SK-N-SH (cell line): ENCODE measurements at regions of chr2 and their contacts with region 1.

Region 1: GRCh38 chr2:205947621-205948495 is 138.1 kb downstream of the INO80D start:
- DNase-seq: peak; percentile 79
- H3K4me3 ChIP-seq: peak overlapping the region in 1 of 2 experiments; percentile 49; a peak in 1 of 4 replicates
- H3K27ac ChIP-seq: no peak overlapping the region
- H3K4me1 ChIP-seq: no peaks in the 10 kb centered on the region
- H3K27me3 ChIP-seq: no peaks in the 10 kb centered on the region
- CTCF ChIP-seq: peak; percentile 96
- EP300 ChIP-seq: no peak
- RAD21 ChIP-seq: peak; percentile 90

Region 2: GRCh38 chr2:205763708-205764211 is 184.1 kb before region 1 on chr2:
- CTCF ChIA-PET with region 1: interaction called, 11 read pairs
- POLR2A ChIA-PET with region 1: no interaction called
- DNase-seq: peak; percentile 43
- H3K4me3 ChIP-seq: peak overlapping the region in 1 of 2 experiments; percentile 46; a peak in 1 of 4 replicates
- H3K27ac ChIP-seq: peak overlapping the region in 1 of 2 experiments; percentile 32; a peak in 1 of 4 replicates
- H3K4me1 ChIP-seq: peaks cover 5 to 38% of the 10 kb centered on the region in 2 experiments; a peak in 3 of 4 replicates
- H3K27me3 ChIP-seq: no peaks in the 10 kb centered on the region
- CTCF ChIP-seq: no peak
- EP300 ChIP-seq: no peak
- RAD21 ChIP-seq: no peak

Region 3: GRCh38 chr2:205776139-205776538 is 171.7 kb before region 1 on chr2:
- CTCF ChIA-PET with region 1: interaction called, 31 read pairs
- POLR2A ChIA-PET with region 1: no interaction called
- DNase-seq: peak; percentile 61
- H3K4me3 ChIP-seq: no peak overlapping the region
- H3K27ac ChIP-seq: no peak overlapping the region
- H3K4me1 ChIP-seq: peaks cover 9 to 10% of the 10 kb centered on the region in 2 experiments
- H3K27me3 ChIP-seq: no peaks in the 10 kb centered on the region
- CTCF ChIP-seq: peak; percentile 62
- EP300 ChIP-seq: no peak
- RAD21 ChIP-seq: peak; percentile 70

Region 4: DNA sequence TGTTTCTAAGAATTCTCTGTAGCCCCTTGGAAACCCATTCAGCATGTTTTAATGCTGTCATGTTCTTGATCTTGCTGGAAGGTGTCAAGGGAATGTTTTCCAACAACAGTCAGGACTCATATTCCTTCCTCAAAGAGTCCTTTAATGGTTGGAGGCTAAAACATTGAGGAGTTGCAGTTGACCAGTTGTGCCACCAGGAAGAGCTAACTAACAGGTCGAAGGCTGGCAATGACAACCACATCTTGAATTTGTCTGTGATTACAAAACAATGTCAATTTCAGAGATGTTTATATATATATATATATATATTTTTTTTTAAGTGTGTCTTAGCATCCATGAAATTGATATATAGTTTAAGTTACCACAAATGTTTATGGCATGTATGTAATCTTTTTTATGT is 13.4 kb before region 1 on chr2:
- CTCF ChIA-PET with region 1: interaction called, 45 read pairs
- POLR2A ChIA-PET with region 1: interaction called, 3 read pairs
- DNase-seq: no peak
- H3K4me3 ChIP-seq: no peak overlapping the region
- H3K27ac ChIP-seq: no peak overlapping the region
- H3K4me1 ChIP-seq: peaks cover 0 to 8% of the 10 kb centered on the region in 2 experiments; a peak in 1 of 4 replicates
- H3K27me3 ChIP-seq: no peaks in the 10 kb centered on the region
- CTCF ChIP-seq: peak; percentile 12; the same call in 1 of the 2 replicates
- EP300 ChIP-seq: no peak
- RAD21 ChIP-seq: no peak